ENCODE measurements at regions of chr3 and their contacts with region 1.

Region 1: GRCh38 chr3:36957862-36958686 is 13.2 kb upstream of the TRANK1 start:
- DNase-seq: no peak
- ATAC-seq: no peak
- H3K4me3 Mint-ChIP-seq: peak overlapping the region; percentile 4
- H3K27ac Mint-ChIP-seq: no peak overlapping the region
- H3K4me1 Mint-ChIP-seq: peaks cover 21% of the 10 kb centered on the region
- H3K27me3 Mint-ChIP-seq: no peaks in the 10 kb centered on the region
- CTCF ChIP-seq: no peak

Region 2: GRCh38 chr3:36729204-36730056 is 228.6 kb before region 1 on chr3:
- CTCF ChIA-PET with region 1: interaction called, 27 read pairs
- POLR2A ChIA-PET with region 1: no interaction called
- intact Hi-C with region 1: loop called (anchors 2 kb)
- DNase-seq: no peak
- ATAC-seq: peak; percentile 60
- H3K4me3 Mint-ChIP-seq: no peak overlapping the region
- H3K27ac Mint-ChIP-seq: no peak overlapping the region
- H3K4me1 Mint-ChIP-seq: no peaks in the 10 kb centered on the region
- H3K27me3 Mint-ChIP-seq: no peaks in the 10 kb centered on the region
- CTCF ChIP-seq: peak; percentile 72

Region 3: DNA sequence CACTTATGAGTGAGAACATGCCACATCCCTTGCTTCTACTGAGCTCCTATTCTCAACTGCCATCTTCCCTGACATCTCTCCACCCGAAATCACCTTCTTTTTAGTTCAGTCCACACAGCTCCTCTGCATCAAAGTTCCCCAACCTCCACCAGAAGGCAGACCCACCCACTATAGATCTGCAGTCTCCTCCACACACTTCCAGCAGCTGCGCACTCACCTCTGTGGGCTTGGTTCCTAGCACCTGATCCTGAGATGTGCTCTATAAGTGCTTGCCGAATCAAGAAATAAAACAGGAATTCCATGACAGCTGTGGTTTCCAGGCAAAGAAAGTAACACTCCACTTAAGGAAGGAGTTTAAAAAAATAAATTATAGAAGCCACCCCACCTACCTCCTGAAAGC is 98.6 kb before region 1 on chr3:
- CTCF ChIA-PET with region 1: interaction called, 52 read pairs
- POLR2A ChIA-PET with region 1: no interaction called
- intact Hi-C with region 1: no loop called
- DNase-seq: no peak
- ATAC-seq: no peak
- H3K4me3 Mint-ChIP-seq: no peak overlapping the region
- H3K27ac Mint-ChIP-seq: no peak overlapping the region
- H3K4me1 Mint-ChIP-seq: peaks cover 9% of the 10 kb centered on the region
- H3K27me3 Mint-ChIP-seq: no peaks in the 10 kb centered on the region
- CTCF ChIP-seq: no peak

Region 4: GRCh38 chr3:36893137-36893557 is 64.9 kb before region 1 on chr3:
- CTCF ChIA-PET with region 1: interaction called, 18 read pairs
- POLR2A ChIA-PET with region 1: no interaction called
- intact Hi-C with region 1: no loop called
- DNase-seq: peak; percentile 35
- ATAC-seq: peak; percentile 86
- H3K4me3 Mint-ChIP-seq: no peak overlapping the region
- H3K27ac Mint-ChIP-seq: peak overlapping the region; percentile 83
- H3K4me1 Mint-ChIP-seq: peaks cover 47% of the 10 kb centered on the region
- H3K27me3 Mint-ChIP-seq: no peaks in the 10 kb centered on the region
- CTCF ChIP-seq: no peak

Region 5: DNA sequence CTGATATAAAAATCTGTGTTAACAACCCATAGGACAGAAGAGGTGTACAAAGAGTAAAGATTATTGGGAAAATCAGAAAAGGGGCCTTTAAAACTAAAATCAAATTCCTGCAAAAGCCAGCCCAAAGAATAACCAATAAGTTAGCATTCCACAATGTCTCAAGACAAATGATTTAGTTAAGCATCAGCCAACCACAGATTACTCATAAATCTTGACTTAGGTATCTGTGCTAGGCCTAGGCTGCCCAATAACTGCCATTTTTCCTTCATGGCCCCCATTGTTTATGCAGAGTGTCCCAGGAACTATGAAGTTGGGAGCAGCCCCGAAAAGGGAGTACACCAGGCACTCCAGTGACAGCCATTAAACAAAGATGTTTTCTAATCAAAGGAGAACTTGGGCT is 20.6 kb before region 1 on chr3:
- CTCF ChIA-PET with region 1: interaction called, 44 read pairs
- POLR2A ChIA-PET with region 1: no interaction called
- intact Hi-C with region 1: no loop called
- DNase-seq: no peak
- ATAC-seq: no peak
- H3K4me3 Mint-ChIP-seq: no peak overlapping the region
- H3K27ac Mint-ChIP-seq: no peak overlapping the region
- H3K4me1 Mint-ChIP-seq: peaks cover 7% of the 10 kb centered on the region
- H3K27me3 Mint-ChIP-seq: no peaks in the 10 kb centered on the region
- CTCF ChIP-seq: no peak

Region 6: GRCh38 chr3:36993326-36994283 is 35.5 kb after region 1 on chr3 and contains the start of gene MLH1:
- CTCF ChIA-PET with region 1: interaction called, 13 read pairs
- POLR2A ChIA-PET with region 1: interaction called, 3 read pairs
- intact Hi-C with region 1: no loop called
- DNase-seq: peak; percentile 100
- ATAC-seq: peak; percentile 90
- H3K4me3 Mint-ChIP-seq: no peak within 1 kb of the TSS
- H3K27ac Mint-ChIP-seq: no peak within 1 kb of the TSS
- H3K4me1 Mint-ChIP-seq: peaks cover 43% of the 10 kb centered on the region
- H3K27me3 Mint-ChIP-seq: no peaks in the 10 kb centered on the region
- CTCF ChIP-seq: no peak
- total RNA-seq, gene MLH1: 89.6 to 93.7 TPM

Measured in activated CD8-positive, alpha-beta T cell treated with anti-CD3 and anti-CD28 coated beads for 36 hours (primary cell).